ENCODE measurements at regions of chr14 and their contacts with region 1.

Region 1: DNA sequence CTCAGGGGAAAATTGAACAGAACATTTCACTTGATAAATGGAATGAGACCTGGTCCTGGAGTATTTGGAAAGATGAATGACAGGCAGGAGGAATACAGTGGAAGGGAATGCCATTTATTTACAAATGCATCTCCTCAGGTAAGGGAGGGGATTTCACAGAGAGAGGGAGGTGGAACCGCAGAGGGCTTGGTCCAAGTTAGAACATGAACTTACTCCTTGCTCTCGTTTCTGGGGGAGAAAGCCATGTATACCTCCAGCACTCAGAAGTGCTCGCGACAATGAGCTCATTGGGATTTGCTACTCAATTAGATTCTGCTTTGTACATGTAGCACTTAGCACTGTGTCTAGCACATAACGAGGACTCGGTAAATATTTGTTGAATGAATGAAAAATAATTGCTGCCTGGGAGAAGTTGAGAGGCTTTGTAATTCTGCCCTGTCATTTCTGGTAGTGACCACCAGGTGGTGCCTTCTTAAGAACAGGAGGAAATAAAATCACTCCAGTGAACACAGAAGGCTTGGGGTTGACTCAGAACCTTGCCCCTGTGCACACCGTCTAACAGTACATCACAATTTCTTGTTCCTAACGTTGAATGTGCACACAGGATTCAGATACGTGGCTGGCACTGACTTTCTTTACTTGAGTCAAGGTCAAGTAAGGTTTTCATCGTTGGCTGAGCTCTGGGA is 91.6 kb downstream of the RGS6 start:
- DNase-seq: no peak
- ATAC-seq: peak; percentile 50
- H3K4me3 Mint-ChIP-seq: no peak overlapping the region
- H3K27ac Mint-ChIP-seq: no peak overlapping the region
- H3K4me1 Mint-ChIP-seq: no peaks in the 10 kb centered on the region
- H3K27me3 Mint-ChIP-seq: peaks cover 24% of the 10 kb centered on the region
- CTCF ChIP-seq: no peak

Region 2: GRCh38 chr14:72084935-72085334 is 61.1 kb after region 1 on chr14:
- CTCF ChIA-PET with region 1: no interaction called
- POLR2A ChIA-PET with region 1: no interaction called
- intact Hi-C with region 1: no loop called
- DNase-seq: no peak
- ATAC-seq: no peak
- H3K4me3 Mint-ChIP-seq: no peak overlapping the region
- H3K27ac Mint-ChIP-seq: no peak overlapping the region
- H3K4me1 Mint-ChIP-seq: no peaks in the 10 kb centered on the region
- H3K27me3 Mint-ChIP-seq: peaks cover 7% of the 10 kb centered on the region
- CTCF ChIP-seq: no peak

Region 3: DNA sequence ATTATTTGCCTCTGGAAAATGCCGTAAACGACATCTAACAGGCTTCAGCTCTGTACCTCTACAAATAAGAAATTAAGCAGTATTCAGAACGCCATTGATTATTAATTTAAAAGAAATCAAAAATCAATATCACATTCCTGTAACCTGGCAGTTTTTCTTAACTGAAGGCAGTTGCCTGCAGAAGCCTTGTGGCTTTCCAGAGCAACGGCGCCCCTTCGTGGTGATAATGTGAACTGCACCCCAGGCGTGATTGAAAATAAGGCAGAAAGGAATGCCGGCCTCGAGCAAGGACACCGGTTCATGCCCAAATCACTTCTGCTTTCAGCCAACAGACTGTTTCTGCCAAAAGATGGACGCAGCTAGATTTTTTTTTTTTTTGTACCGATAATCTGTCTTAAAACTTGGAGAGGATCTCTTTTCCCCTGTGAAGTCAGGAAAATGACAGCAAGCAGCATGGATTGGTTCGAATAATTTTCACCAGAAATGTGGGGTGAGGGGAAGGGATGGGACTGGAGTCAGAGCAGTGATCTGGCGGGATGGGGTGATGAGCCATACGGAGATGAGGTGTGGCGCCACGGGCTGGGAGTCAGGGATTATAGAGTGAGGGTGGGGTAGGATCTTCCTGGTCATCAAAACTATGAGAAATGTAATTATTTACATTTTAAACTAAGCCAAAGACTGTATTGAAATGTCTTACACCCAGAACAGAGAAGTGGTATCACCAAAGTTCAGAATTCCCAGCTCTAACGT is 397.0 kb after region 1 on chr14:
- CTCF ChIA-PET with region 1: no interaction called
- POLR2A ChIA-PET with region 1: no interaction called
- intact Hi-C with region 1: loop called (anchors 1 kb)
- DNase-seq: peak; percentile 45
- ATAC-seq: no peak
- H3K4me3 Mint-ChIP-seq: no peak overlapping the region
- H3K27ac Mint-ChIP-seq: no peak overlapping the region
- H3K4me1 Mint-ChIP-seq: peaks cover 6% of the 10 kb centered on the region
- H3K27me3 Mint-ChIP-seq: peaks cover 16% of the 10 kb centered on the region
- CTCF ChIP-seq: no peak